ENCODE measurements at regions of chr1 and their contacts with region 1.

Region 1: GRCh38 chr1:52424231-52424636 is 19.8 kb downstream of the PRPF38A start:
- DNase-seq: peak; percentile 46 to 90 (median 86)
- H3K4me3 ChIP-seq: peak overlapping the region in 1 of 7 experiments; percentile 5
- H3K27ac ChIP-seq: peak overlapping the region; percentile 8 to 38
- H3K4me1 ChIP-seq: peaks cover 14 to 29% (median 26%) of the 10 kb centered on the region in 4 experiments
- H3K27me3 ChIP-seq: no peaks in the 10 kb centered on the region

Region 2: DNA sequence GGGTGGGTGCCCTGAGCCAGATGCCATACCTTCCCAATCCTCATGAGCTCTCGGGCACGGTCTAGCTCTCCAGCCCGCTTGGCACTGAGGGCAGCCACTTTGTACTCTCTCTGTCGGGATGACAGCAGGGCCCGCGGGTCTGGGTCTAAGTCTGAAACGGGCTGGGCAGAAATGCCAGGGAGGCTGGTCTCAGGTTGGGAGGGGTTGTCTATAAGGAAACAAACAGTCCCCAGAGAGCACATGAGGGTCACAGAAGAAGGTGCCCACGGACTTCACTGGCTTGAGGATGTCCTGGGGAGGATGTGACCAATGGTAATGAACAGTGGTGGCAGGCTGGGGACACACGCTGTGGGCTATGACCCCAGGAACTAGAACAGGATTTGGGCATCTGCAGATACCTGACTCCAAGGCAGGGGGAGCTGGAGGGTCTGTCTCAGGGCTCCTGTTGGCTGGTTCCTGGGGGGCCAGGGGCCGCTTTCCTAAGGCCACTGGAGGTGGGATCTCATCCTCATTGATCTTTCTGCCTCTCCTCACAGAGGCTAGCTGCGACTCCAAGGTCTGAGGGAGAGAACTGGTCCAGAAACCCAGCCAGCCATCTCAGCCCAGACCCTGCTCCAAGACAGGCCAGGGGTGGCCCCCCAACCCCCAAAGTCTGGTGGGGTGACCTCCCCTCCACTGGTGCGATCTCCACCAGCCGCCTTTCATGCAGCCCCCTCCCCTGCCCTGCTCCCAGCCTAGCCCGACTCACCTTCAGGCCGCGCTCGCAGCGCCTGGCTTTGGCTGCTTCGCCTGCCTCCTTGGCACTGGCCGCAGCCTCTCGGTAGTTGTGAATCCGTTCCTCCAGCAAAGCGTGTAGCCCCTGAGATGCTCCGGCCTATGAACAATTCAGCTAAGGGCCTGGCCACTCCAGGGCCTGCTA is 64.3 kb before region 1 on chr1:
- CTCF ChIA-PET with region 1: no interaction called
- POLR2A ChIA-PET with region 1: no interaction called
- DNase-seq: no peak
- H3K4me3 ChIP-seq: no peak overlapping the region
- H3K27ac ChIP-seq: no peak overlapping the region
- H3K4me1 ChIP-seq: peaks cover under 1 to 8% (median 4%) of the 10 kb centered on the region in 4 experiments
- H3K27me3 ChIP-seq: no peaks in the 10 kb centered on the region

Region 3: GRCh38 chr1:52404116-52404986 is 19.9 kb before region 1 on chr1 and contains the starts of genes ORC1 and PRPF38A:
- CTCF ChIA-PET with region 1: interaction called, 9 read pairs
- POLR2A ChIA-PET with region 1: interaction called, 10 read pairs
- DNase-seq: peak; percentile 98 to 99 (median 99)
- H3K4me3 ChIP-seq: peak within 1 kb of the TSS; percentile 85 to 98 (median 97)
- H3K27ac ChIP-seq: peak within 1 kb of the TSS; percentile 96 to 99
- H3K4me1 ChIP-seq: peaks cover 4 to 25% (median 19%) of the 10 kb centered on the region in 4 experiments
- H3K27me3 ChIP-seq: no peaks in the 10 kb centered on the region

Region 4: DNA sequence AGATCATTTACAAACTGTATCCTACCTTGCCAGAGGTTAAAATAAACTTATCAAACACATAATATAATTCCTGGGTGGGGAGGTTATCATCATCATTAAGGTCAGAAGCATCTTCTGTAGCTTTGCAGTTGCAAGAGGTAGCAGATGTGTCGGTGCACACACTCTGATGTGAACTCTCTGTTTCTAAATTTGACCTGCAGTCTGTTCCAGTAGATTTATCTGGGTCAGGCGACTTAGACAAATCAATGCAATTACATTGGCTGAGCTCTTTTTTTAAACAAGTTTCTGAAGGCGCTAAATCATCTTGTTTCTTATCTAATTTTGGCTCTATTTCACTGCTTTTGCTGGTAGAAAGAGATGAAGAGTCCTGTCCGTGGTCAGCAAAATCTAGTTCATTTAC is 50.6 kb after region 1 on chr1:
- CTCF ChIA-PET with region 1: no interaction called
- POLR2A ChIA-PET with region 1: no interaction called
- DNase-seq: no peak
- H3K4me3 ChIP-seq: no peak overlapping the region
- H3K27ac ChIP-seq: no peak overlapping the region
- H3K4me1 ChIP-seq: peaks cover 0 to 10% (median 7%) of the 10 kb centered on the region in 4 experiments
- H3K27me3 ChIP-seq: no peaks in the 10 kb centered on the region

Region 5: GRCh38 chr1:52558941-52559340 is 134.7 kb after region 1 on chr1:
- CTCF ChIA-PET with region 1: no interaction called
- POLR2A ChIA-PET with region 1: no interaction called
- DNase-seq: no peak
- H3K4me3 ChIP-seq: no peak overlapping the region
- H3K27ac ChIP-seq: no peak overlapping the region
- H3K4me1 ChIP-seq: peaks cover 8 to 15% (median 13%) of the 10 kb centered on the region in 4 experiments
- H3K27me3 ChIP-seq: no peaks in the 10 kb centered on the region

Measured in common myeloid progenitor, CD34-positive (primary cell).